G401 (cell line): ENCODE measurements at regions of chr12 and their contacts with region 1.

Region 1: DNA sequence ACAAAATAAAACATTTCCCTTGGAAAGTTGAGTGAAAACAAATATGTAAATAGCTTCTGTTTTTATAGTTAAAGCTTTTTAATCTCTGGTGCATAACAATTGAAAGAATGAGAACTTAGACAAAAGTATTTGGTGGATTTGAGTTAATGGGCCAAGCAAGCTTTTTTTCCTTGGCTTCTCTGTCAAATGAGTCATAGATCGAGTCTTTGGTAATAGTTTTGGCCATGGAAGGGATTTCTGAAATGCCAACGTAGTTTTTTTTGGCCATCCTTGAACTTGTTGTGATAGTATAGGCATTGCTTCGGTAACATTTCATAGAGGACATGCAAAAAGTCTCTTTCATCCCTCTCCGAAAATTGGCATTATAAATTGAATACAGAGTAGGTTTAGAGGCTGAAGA is 34.9 kb downstream of the GPR19 start:
- DNase-seq: no peak

Region 2: DNA sequence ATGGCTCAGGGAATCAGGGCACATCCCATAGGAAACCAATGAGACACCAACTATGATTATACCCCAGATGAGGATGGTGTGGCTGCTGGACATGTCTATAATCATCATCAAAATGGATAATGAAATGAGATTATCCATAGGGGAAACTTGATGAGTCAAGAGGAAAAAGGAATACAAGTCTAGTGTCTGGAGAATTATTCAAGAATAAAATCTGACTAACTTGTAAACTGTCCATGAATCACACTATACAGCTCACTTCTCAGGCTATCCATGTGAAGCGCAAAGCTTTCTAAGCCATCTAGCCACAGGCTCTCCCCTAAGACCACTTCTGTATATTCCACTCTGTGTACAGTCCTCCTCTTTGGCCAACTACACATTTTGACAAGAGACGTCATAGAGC is 150.9 kb before region 1 on chr12:
- in situ Hi-C with region 1: loop called (anchors 10 kb)
- DNase-seq: no peak